AG04449 (cell line): ENCODE measurements at regions of chr10 and their contacts with region 1.

Region 1: DNA sequence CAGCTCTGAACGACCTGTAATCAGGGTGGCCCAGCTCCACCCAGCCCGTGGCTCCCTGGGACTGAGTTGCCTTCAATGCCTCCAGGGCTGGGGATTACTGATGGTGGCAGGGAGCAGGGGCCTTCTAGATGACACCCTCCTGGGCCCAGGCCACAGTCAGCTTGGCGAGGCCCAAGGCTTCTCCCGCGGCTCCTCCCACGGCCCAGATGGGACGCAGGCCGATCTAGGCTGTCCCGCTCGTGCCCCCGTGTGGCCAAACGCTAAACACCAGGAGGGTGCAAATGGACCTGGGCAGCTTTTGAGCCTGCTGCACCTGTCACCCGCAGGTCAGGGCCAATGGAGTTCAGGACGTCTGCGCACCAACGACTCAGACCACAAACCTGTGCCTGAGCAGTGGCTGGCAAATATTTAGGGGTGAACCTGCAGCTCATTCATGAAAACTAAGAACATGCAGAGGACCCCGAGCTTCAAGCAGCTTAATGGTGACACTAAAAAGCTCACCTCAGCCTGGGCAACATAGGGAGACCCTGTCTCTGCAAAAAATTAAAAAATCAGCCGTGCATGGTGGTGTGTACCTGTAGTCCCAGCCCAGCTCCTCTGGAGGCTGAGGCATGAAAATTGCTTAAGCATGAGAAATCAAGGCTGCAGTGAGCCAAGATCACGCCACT is 43.2 kb downstream of the ASB13 start:
- DNase-seq: peak; percentile 21
- H3K4me3 ChIP-seq: no peak overlapping the region
- CTCF ChIP-seq: peak; percentile 96

Region 2: DNA sequence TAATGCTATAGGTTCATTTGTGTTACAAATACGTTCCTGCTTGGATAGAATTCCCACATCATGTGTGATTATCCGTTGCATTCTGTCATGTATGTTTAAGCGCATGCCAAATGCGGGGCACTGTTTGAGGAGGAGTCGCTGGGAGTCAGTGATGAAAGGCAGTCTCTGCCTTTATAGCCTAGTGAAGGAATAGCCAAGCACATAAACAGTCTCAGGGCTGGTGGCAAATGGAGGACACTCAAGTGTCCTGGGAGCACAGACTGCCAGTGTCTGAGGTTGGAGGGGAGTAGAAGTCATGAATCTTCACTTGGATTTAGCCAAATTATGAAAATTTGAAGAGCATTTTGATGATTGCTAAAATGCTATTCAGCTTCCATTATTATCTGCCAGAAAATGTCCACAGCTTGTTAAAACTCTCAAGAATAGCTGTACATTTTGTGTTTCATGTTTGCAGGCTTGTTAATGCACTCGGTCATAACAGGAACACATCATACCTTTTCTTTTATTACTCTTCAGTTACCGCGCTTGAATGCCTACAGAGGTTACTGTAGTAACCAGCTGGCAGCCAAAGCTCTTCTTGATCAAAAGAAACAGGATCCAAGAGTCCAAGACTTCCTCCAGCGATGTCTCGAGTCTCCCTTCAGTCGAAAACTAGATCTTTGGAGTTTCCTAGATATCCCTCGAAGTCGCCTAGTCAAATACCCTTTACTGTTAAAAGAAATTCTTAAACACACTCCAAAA is 169.3 kb before region 1 on chr10:
- CTCF ChIA-PET with region 1: interaction called, 1,068 read pairs
- POLR2A ChIA-PET with region 1: interaction called, 52 read pairs
- DNase-seq: no peak
- H3K4me3 ChIP-seq: no peak overlapping the region
- CTCF ChIP-seq: no peak

Region 3: GRCh38 chr10:5466418-5467154 is 156.6 kb before region 1 on chr10:
- CTCF ChIA-PET with region 1: interaction called, 43 read pairs
- POLR2A ChIA-PET with region 1: no interaction called
- DNase-seq: peak; percentile 37
- H3K4me3 ChIP-seq: no peak overlapping the region
- CTCF ChIP-seq: no peak

Region 4: DNA sequence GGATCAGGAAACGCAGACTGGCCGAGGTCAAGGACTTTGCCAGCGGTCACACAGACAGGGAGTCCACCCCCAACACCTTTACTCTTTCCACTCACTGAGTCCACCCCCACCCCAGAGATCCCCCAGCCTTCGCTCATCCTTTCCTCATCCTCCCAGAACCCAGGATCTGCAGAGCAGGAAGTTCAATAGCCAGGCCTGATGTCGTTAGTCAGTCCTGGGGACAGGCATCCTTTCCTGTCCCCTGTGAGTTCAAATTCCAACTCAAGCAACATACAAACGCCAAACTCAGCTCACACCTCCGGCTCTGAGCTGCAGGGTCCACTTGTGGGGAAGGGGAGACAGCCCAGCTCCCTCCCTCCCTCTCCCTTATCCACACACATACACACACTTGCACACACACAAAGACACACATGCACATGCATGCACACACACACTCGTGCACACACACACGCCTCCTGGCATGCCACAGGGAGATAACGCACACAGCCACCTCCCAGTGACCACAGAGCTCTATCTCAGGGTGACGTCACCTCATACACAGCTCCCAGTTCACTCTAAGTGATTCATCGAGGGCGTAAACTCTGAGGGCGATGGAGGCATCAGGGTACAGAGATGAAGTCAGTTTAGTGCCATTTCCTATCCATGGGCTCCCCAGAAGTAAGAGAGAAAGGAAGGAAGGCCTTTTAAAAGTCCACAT is 74.5 kb before region 1 on chr10:
- CTCF ChIA-PET with region 1: interaction called, 21 read pairs
- POLR2A ChIA-PET with region 1: interaction called, 5 read pairs
- DNase-seq: peak; percentile 82
- H3K4me3 ChIP-seq: no peak overlapping the region
- CTCF ChIP-seq: no peak

Region 5: GRCh38 chr10:5565671-5566577 is 57.3 kb before region 1 on chr10:
- CTCF ChIA-PET with region 1: interaction called, 10 read pairs
- POLR2A ChIA-PET with region 1: no interaction called
- DNase-seq: peak; percentile 55
- H3K4me3 ChIP-seq: no peak overlapping the region
- CTCF ChIP-seq: no peak

Region 6: DNA sequence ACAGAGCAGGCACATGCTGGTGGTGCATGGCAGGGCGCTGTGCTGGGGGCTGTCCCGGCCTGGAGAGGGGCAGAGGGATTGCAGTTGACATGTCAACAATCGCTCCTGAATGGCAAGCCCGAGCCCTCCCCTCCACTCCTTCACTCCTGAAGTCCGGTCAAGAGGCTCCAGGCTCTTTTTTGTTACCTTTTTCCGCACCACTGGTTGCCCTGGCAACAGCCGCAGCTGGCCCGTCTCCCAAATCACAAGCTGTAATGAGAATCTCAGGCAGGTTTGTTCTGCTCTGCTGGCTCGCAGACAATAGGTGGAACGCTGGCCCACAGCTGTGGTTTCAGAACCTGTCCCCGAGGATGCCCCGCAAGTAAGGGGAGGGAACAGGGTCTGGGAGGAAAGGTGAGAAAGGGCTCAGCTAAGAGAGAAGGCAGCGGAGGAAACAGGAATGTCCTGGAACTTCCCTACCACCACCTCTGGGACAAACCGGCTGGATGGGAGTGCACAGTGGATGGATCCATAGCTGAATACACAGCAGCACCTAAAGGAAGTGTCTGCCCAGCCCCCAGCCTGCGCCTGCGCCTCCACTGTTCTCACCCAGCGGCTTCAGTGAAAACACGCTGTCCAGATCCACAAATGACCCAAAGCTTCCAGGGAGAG is 39.6 kb before region 1 on chr10:
- CTCF ChIA-PET with region 1: interaction called, 18 read pairs
- POLR2A ChIA-PET with region 1: interaction called, 4 read pairs
- DNase-seq: no peak
- H3K4me3 ChIP-seq: no peak overlapping the region
- CTCF ChIP-seq: no peak

Region 7: DNA sequence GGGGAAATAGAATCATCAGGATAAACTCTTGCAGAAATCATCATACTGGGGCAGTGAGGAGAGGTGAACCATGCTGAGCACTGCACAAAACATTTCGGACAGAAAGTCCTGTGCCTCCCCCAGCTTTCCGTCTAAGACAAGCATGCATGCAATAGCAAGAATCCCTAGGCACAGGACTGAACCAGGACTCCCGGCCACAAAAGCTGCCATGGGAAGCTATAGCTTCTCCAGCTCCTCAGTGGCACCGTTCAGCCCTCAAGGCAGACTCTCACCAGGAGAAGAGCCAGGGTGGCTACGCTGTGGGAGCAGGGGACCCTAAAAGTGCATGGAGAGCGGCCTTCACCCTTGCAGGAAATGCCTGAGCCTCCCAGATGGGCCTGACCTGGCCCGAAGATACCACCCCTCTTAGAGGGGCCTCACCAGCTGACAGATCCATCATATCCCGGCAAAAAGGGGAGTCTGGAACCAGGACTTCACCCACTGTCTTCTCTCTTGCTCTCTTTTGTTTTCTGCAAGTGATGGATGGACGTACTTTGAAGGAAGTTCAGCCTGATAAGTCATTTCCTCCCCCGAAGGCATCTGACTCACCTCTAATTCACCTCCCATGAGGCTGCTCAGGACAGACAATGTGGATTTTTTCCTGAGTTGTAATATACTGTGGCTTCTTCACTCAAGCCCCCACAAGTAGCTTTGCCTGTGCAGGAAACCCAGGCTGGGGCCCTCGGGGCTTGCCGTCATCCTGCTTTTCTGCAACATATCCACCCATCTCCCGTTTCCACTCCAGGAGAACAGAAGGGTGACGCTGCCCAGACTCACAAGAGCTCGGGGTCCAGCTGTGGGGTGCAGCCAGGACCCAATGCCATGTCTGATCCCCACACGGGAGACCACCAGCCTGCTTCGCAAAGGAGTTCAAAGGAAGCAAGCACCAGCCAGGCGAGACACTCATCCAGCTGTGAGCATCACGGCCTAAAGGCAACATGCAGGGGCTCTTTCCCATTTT is 27.3 kb before region 1 on chr10:
- CTCF ChIA-PET with region 1: interaction called, 40 read pairs
- POLR2A ChIA-PET with region 1: interaction called, 19 read pairs
- DNase-seq: peak; percentile 73
- H3K4me3 ChIP-seq: peak overlapping the region; percentile 49
- CTCF ChIP-seq: no peak

Region 8: GRCh38 chr10:5832936-5833335 is 209.7 kb after region 1 on chr10:
- CTCF ChIA-PET with region 1: no interaction called
- POLR2A ChIA-PET with region 1: no interaction called
- DNase-seq: no peak
- H3K4me3 ChIP-seq: no peak overlapping the region
- CTCF ChIP-seq: no peak